PC-9 (cell line): ENCODE measurements at regions of chr5 and their contacts with region 1.

Region 1: GRCh38 chr5:41856644-41857491 is 13.4 kb downstream of the OXCT1 start:
- DNase-seq: peak; percentile 46 to 66
- H3K4me3 ChIP-seq: no peak overlapping the region
- H3K27ac ChIP-seq: no peak overlapping the region
- H3K4me1 ChIP-seq: no peaks in the 10 kb centered on the region
- H3K27me3 ChIP-seq: no peaks in the 10 kb centered on the region
- CTCF ChIP-seq: peak; percentile 90

Region 2: GRCh38 chr5:42057254-42057690 is 200.4 kb after region 1 on chr5:
- CTCF ChIA-PET with region 1: interaction called, 48 read pairs
- POLR2A ChIA-PET with region 1: no interaction called
- intact Hi-C with region 1: loop called (anchors 1 kb)
- DNase-seq: peak; percentile 46 to 60
- H3K4me3 ChIP-seq: no peak overlapping the region
- H3K27ac ChIP-seq: no peak overlapping the region
- H3K4me1 ChIP-seq: no peaks in the 10 kb centered on the region
- H3K27me3 ChIP-seq: no peaks in the 10 kb centered on the region
- CTCF ChIP-seq: peak; percentile 97

Region 3: GRCh38 chr5:42636425-42636824 is 779.6 kb after region 1 on chr5:
- CTCF ChIA-PET with region 1: no interaction called
- POLR2A ChIA-PET with region 1: no interaction called
- intact Hi-C with region 1: loop called (anchors 5 kb)
- DNase-seq: no peak
- H3K4me3 ChIP-seq: no peak overlapping the region
- H3K27ac ChIP-seq: no peak overlapping the region
- H3K4me1 ChIP-seq: no peaks in the 10 kb centered on the region
- H3K27me3 ChIP-seq: no peaks in the 10 kb centered on the region
- CTCF ChIP-seq: peak; percentile 59; the same call in 1 of the 2 replicates

Region 4: GRCh38 chr5:42767491-42768105 is 910.7 kb after region 1 on chr5:
- CTCF ChIA-PET with region 1: interaction called, 6 read pairs
- POLR2A ChIA-PET with region 1: no interaction called
- intact Hi-C with region 1: loop called (anchors 1 kb)
- DNase-seq: no peak
- H3K4me3 ChIP-seq: no peak overlapping the region
- H3K27ac ChIP-seq: no peak overlapping the region
- H3K4me1 ChIP-seq: peaks cover 1% of the 10 kb centered on the region; the same call in 1 of the 2 replicates
- H3K27me3 ChIP-seq: no peaks in the 10 kb centered on the region
- CTCF ChIP-seq: peak; percentile 86